ENCODE measurements at regions of chr4 and their contacts with region 1.

Region 1: DNA sequence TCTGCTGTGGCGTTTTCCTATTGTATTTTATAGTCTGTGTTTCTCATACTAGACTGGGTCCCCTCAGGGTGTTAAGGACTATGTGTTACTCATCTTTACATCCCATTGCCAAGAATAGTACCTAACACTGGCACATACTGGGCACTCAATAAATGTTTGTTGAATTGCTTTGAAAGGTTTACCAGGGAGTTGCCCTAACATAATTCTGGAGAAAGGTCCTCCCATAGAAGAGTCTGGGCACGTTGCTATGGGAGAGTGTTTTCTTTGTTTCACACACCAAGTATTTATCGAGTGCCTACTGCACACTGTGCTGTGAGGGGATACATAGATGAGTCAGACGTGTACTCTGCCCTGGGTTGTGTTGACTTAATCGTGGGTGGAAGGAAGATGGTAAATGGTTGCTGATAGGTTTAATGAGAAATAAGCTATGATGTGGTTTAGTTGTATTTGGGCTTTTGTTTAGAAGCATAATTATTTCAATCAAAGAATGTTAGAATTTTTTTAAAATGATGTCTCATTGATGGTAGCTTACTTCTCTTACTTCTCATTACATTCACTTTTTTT is 42.9 kb downstream of the AFF1 start:
- DNase-seq: peak; percentile 43
- ATAC-seq: peak; percentile 84
- H3K4me3 Mint-ChIP-seq: no peak overlapping the region
- H3K27ac Mint-ChIP-seq: peak overlapping the region; percentile 59
- H3K4me1 Mint-ChIP-seq: peaks cover 67% of the 10 kb centered on the region
- H3K27me3 Mint-ChIP-seq: no peaks in the 10 kb centered on the region

Region 2: DNA sequence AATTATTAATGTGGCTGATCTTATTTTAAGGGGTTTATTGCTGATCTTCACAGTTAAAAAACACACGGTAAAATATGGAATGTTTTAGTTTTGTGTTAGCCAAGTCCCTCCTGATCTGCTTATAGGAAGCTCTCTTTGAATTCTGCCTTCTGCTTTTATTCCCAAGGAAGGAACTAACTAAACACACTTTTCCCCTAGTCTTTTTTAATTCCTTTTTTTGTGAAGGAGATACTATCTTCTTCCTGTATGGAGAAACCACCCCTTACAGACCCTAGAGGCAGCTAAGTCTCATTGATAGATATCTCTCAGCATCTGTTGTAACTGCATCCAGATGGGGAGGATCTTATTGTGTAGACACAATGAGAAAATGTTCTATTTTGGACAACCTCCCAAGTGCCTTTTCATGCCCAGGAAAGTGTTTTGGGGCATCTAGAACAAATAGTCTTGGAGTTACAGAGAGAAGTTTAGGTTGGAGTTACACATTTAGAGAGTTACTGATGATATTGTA is 21.5 kb after region 1 on chr4:
- CTCF ChIA-PET with region 1: interaction called, 3 read pairs
- POLR2A ChIA-PET with region 1: no interaction called
- intact Hi-C with region 1: loop called in 1 of 2 experiments (anchors 2 kb)
- DNase-seq: no peak
- ATAC-seq: no peak
- H3K4me3 Mint-ChIP-seq: no peak overlapping the region
- H3K27ac Mint-ChIP-seq: no peak overlapping the region
- H3K4me1 Mint-ChIP-seq: peaks cover 27% of the 10 kb centered on the region
- H3K27me3 Mint-ChIP-seq: no peaks in the 10 kb centered on the region

Measured in activated CD4-positive, alpha-beta T cell treated with anti-CD3 and anti-CD28 coated beads for 36 hours (primary cell).